HCT116 (cell line): ENCODE measurements at regions of chr12 and their contacts with region 1.

Region 1: GRCh38 chr12:13534645-13535398 is 338.3 kb downstream of the EMP1 start:
- DNase-seq: peak; percentile 51
- ATAC-seq: peak; percentile 87
- H3K4me3 ChIP-seq: no peak overlapping the region
- H3K27ac ChIP-seq: peak overlapping the region; percentile 7; the same call in 1 of the 2 replicates
- H3K4me1 ChIP-seq: peaks cover 34 to 36% of the 10 kb centered on the region in 2 experiments
- H3K27me3 ChIP-seq: no peaks in the 10 kb centered on the region
- CTCF ChIP-seq: peak; percentile 61 to 100 (median 99); a peak in 5 of 6 replicates
- POLR2A ChIP-seq: no peak
- RAD21 ChIP-seq: peak; percentile 69

Region 2: DNA sequence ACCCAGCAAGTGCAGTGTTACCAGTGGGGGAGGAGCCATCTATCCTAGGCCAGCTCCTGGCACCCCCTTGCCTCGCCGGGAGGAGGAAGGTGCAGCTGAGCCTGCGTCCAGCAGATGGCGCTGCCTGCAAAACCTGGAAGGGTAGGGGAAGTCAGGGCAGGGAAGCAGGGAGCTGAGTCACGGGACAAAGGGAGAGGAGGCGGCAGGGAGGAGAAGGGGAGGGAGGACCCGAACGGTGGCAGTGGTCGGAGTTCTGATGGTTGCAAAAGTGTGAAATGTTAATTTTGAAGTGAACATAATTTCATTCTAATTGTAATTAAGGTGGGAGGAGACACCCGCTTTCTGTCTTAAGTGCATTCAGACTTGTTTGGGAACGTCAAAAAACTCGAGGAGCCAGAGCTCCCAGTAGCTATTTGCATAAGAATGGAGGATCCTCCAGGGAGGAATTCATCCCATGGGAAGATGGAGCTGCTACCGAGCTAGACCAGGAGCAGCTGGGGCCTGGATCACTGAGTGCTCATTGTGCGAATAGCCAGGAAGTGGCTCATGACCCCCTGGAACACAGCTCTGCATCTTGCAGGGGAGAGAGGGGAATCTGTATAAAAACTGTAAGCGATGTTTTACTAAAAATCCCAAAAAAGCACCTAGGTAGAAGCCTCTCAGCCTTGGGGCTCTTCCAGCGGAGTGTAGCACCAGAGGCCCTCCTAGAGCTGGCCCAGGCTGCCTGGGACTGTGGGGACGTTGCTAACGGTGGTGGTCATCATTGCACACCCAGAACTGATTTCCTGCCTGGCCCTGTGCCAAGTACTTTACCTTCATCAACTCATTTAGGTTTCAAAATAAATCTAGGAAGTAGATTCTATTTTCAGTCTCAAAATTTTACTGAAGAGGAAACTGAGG is 278.8 kb before region 1 on chr12:
- CTCF ChIA-PET with region 1: interaction called, 24 read pairs
- POLR2A ChIA-PET with region 1: no interaction called
- RAD21 ChIA-PET with region 1: no interaction called
- intact Hi-C with region 1: no loop called
- DNase-seq: peak; percentile 89
- ATAC-seq: peak; percentile 100
- H3K4me3 ChIP-seq: peak overlapping the region in 1 of 2 experiments; percentile 13; a peak in 1 of 4 replicates
- H3K27ac ChIP-seq: no peak overlapping the region
- H3K4me1 ChIP-seq: peaks cover 0 to 15% of the 10 kb centered on the region in 2 experiments; a peak in 2 of 4 replicates
- H3K27me3 ChIP-seq: no peaks in the 10 kb centered on the region
- CTCF ChIP-seq: peak; percentile 91 to 98 (median 97)
- POLR2A ChIP-seq: no peak
- RAD21 ChIP-seq: peak; percentile 98

Region 3: GRCh38 chr12:13278249-13278787 is 256.5 kb before region 1 on chr12:
- CTCF ChIA-PET with region 1: interaction called, 17 read pairs
- POLR2A ChIA-PET with region 1: no interaction called
- RAD21 ChIA-PET with region 1: interaction called in 1 of 2 experiments, 3 read pairs
- intact Hi-C with region 1: loop called (anchors 1 kb)
- DNase-seq: peak; percentile 34
- ATAC-seq: peak; percentile 99
- H3K4me3 ChIP-seq: no peak overlapping the region
- H3K27ac ChIP-seq: peak overlapping the region; percentile 40; the same call in 1 of the 2 replicates
- H3K4me1 ChIP-seq: peaks cover 3 to 13% of the 10 kb centered on the region in 2 experiments; a peak in 3 of 4 replicates
- H3K27me3 ChIP-seq: no peaks in the 10 kb centered on the region
- CTCF ChIP-seq: peak; percentile 83 to 98 (median 96)
- POLR2A ChIP-seq: no peak
- RAD21 ChIP-seq: peak; percentile 94

Region 4: DNA sequence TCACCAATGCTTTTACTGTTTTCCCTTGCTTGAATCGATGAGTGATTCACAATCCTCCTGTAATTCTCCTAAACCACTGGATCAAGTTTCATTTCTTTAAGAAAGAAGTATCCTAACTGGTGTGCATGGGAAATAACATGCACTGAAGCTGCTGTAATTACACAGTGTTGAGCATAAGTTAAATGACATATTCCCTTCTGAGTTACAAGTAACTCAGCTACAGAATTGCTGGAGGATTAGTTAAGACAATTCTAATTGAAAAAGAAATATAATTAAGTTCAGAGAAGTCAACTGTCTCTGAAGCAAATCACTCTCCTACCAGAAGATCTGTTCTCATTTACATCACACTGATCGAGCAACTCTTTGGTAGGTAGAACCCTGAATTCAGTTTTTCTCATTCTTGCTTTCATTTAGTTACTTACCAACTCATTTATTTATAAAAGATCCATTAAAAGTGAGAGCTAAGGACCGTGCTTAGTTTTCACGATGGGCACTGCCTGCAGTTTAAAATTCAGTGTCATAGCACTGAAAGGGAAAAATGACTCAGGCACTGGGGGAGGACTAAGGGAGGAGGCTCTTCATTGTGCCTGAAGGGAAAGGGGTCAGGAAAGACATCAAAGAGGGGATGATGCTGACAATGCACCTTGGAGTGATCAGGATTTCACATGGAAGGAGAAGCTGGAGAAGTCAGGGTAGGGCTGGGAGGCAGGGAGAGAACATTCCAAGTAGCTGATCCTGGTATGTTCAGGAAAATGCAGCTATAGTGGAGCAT is 11.1 kb before region 1 on chr12:
- CTCF ChIA-PET with region 1: interaction called, 19 read pairs
- POLR2A ChIA-PET with region 1: interaction called, 5 read pairs
- RAD21 ChIA-PET with region 1: interaction called in 1 of 2 experiments, 3 read pairs
- intact Hi-C with region 1: no loop called
- DNase-seq: no peak
- ATAC-seq: peak; percentile 74
- H3K4me3 ChIP-seq: 0 out of 4 replicates have a peak overlapping the region, but pooled peaks of 1 of the 2 experiments have one; percentile 6
- H3K27ac ChIP-seq: peak overlapping the region; percentile 4; the same call in 1 of the 2 replicates
- H3K4me1 ChIP-seq: peaks cover 34 to 48% of the 10 kb centered on the region in 2 experiments
- H3K27me3 ChIP-seq: no peaks in the 10 kb centered on the region
- CTCF ChIP-seq: no peak
- POLR2A ChIP-seq: no peak
- RAD21 ChIP-seq: no peak

Region 5: GRCh38 chr12:13546231-13546630 is 11.4 kb after region 1 on chr12:
- CTCF ChIA-PET with region 1: interaction called, 51 read pairs
- POLR2A ChIA-PET with region 1: no interaction called
- RAD21 ChIA-PET with region 1: no interaction called
- intact Hi-C with region 1: no loop called
- DNase-seq: no peak
- ATAC-seq: no peak
- H3K4me3 ChIP-seq: no peak overlapping the region
- H3K27ac ChIP-seq: no peak overlapping the region
- H3K4me1 ChIP-seq: peaks cover 10 to 19% of the 10 kb centered on the region in 2 experiments
- H3K27me3 ChIP-seq: no peaks in the 10 kb centered on the region
- CTCF ChIP-seq: no peak
- POLR2A ChIP-seq: no peak
- RAD21 ChIP-seq: no peak

Region 6: DNA sequence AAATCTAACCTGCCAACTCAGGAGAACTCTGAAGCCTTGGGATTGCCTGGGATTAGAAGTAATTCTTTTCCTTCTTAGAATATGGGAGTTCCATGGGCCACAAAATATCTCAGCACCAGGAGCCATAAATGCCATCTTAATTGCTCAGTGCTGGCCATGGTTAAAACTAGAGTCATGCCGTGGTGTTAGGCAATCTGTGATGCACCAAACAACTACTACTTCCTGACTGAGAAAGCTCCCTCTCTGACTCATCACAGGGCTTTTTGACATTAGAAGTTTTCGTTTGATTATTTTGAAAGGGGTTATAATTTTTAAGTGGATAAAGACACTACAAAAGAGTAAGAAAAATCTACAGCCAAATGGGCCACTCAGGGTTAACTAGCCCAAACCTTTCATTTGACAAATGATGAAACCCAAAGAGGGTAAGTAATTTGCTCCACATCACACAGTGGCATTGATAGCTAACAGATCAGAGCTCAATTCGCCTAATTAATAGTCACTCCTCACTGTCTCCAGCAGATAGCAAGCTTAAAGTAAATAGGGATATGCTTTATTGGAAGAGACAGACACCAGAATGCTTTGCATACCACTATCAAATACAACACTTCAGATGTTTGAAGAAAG is 39.0 kb after region 1 on chr12:
- CTCF ChIA-PET with region 1: interaction called, 18 read pairs
- POLR2A ChIA-PET with region 1: interaction called, 4 read pairs
- RAD21 ChIA-PET with region 1: interaction called, 3 to 4 read pairs
- intact Hi-C with region 1: no loop called
- DNase-seq: peak; percentile 87
- ATAC-seq: peak; percentile 69
- H3K4me3 ChIP-seq: no peak overlapping the region
- H3K27ac ChIP-seq: peak overlapping the region; percentile 93
- H3K4me1 ChIP-seq: peaks cover 68 to 70% of the 10 kb centered on the region in 2 experiments
- H3K27me3 ChIP-seq: no peaks in the 10 kb centered on the region
- CTCF ChIP-seq: no peak
- POLR2A ChIP-seq: no peak
- RAD21 ChIP-seq: peak; percentile 18

Region 7: DNA sequence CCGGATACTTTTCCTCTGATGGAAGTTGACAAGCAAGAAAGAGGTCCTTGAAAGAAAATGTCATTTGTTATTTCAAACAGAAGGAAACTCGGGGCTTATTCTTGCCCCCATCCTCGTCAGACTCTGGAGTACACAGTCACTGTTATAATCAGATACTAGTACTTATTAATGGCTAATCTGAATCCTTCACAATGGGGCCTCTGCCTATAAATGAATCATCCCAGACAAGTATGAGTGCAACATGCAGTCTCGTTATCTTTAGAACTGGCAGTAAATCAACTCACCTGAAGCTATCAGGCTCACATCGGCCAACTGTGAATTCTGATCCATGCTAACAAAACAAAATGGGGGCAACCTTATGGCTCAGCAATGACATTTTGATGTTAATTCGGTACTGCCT is 229.9 kb after region 1 on chr12:
- CTCF ChIA-PET with region 1: no interaction called
- POLR2A ChIA-PET with region 1: no interaction called
- RAD21 ChIA-PET with region 1: no interaction called
- intact Hi-C with region 1: no loop called
- DNase-seq: no peak
- ATAC-seq: no peak
- H3K4me3 ChIP-seq: no peak overlapping the region
- H3K27ac ChIP-seq: no peak overlapping the region
- H3K4me1 ChIP-seq: no peaks in the 10 kb centered on the region
- H3K27me3 ChIP-seq: no peaks in the 10 kb centered on the region
- CTCF ChIP-seq: no peak
- POLR2A ChIP-seq: no peak
- RAD21 ChIP-seq: no peak